CD4-positive, alpha-beta T cell (primary cell): ENCODE measurements at regions of chr15 and their contacts with region 1.

Region 1: DNA sequence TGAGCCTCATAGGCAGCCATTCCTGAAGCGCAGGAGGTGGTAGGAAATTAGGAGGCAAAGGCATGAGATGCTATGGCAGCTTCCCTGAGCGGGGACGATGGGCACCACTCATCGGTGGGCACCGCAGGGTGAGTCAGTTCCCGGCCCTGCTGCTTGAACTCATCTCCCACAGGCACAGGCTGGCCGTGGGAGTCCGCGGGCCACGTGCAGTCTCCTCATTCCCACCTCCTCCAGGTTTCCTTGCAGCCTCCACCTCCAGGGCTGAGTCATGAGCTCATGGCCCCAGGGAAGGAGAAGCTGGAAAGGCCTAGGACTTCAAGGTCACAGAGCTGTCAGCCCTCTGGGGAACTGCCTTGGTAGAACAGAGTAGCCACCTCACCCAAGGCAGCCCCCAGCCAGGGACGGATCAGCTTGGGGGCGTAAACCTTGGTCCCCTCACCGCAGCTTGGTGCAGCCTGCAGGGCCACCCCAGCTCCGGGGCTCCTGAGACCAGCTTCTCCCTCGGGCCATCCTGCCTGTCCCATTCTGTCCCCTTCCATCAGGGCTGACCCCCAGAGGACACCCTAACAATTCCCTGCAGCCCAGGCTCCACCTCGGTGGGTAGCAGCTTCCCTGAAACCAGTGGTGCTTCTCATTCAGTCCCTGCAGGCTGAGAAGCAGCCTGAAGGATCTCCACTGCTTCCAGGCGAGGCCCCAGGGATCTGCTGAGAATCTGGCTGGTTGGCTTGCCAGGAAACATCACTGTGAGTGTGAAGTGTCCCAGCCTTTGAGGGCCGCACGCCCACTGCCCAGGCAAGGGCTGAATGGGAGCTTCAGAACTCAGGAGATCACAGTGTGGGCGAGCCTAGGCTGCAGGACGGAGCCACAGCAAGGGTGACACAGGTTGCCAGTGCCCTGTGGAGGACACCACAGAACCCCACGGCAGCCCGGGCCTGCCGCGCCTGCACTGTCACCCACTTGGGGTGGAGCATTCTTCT is 150.7 kb upstream of the MEF2A start:
- DNase-seq: no peak
- ATAC-seq: no peak
- H3K4me3 ChIP-seq: no peak overlapping the region
- H3K4me3 Mint-ChIP-seq: no peak overlapping the region
- H3K27ac ChIP-seq: no peak overlapping the region
- H3K27ac Mint-ChIP-seq: no peak overlapping the region
- H3K4me1 ChIP-seq: no peaks in the 10 kb centered on the region
- H3K4me1 Mint-ChIP-seq: no peaks in the 10 kb centered on the region
- H3K27me3 ChIP-seq: no peaks in the 10 kb centered on the region
- H3K27me3 Mint-ChIP-seq: no peaks in the 10 kb centered on the region
- CTCF ChIP-seq: no peak

Region 2: GRCh38 chr15:99250494-99251435 is 164.3 kb before region 1 on chr15:
- CTCF ChIA-PET with region 1: no interaction called
- POLR2A ChIA-PET with region 1: no interaction called
- intact Hi-C with region 1: no loop called
- DNase-seq: peak; percentile 85 to 98 (median 90)
- ATAC-seq: peak; percentile 98
- H3K4me3 ChIP-seq: peak overlapping the region; percentile 75
- H3K4me3 Mint-ChIP-seq: peak overlapping the region; percentile 86
- H3K27ac ChIP-seq: peak overlapping the region; percentile 32 to 53
- H3K27ac Mint-ChIP-seq: peak overlapping the region; percentile 81
- H3K4me1 ChIP-seq: peaks cover 22% of the 10 kb centered on the region
- H3K4me1 Mint-ChIP-seq: peaks cover 24% of the 10 kb centered on the region
- H3K27me3 ChIP-seq: no peaks in the 10 kb centered on the region
- H3K27me3 Mint-ChIP-seq: no peaks in the 10 kb centered on the region
- CTCF ChIP-seq: no peak

Region 3: GRCh38 chr15:99359769-99360168 is 55.3 kb before region 1 on chr15:
- CTCF ChIA-PET with region 1: no interaction called
- POLR2A ChIA-PET with region 1: no interaction called
- intact Hi-C with region 1: loop called in 1 of 2 experiments (anchors 10 kb)
- DNase-seq: no peak
- ATAC-seq: no peak
- H3K4me3 ChIP-seq: no peak overlapping the region
- H3K4me3 Mint-ChIP-seq: no peak overlapping the region
- H3K27ac ChIP-seq: no peak overlapping the region
- H3K27ac Mint-ChIP-seq: no peak overlapping the region
- H3K4me1 ChIP-seq: no peaks in the 10 kb centered on the region
- H3K4me1 Mint-ChIP-seq: peaks cover 5% of the 10 kb centered on the region
- H3K27me3 ChIP-seq: no peaks in the 10 kb centered on the region
- H3K27me3 Mint-ChIP-seq: no peaks in the 10 kb centered on the region
- CTCF ChIP-seq: no peak